OCI-LY7 (cell line): ENCODE measurements at regions of chrX and their contacts with region 1.

Region 1: GRCh38 chrX:107654872-107655761 is 26.8 kb downstream of the PRPS1 start:
- DNase-seq: peak; percentile 67
- H3K4me3 ChIP-seq: no peak overlapping the region
- H3K27ac ChIP-seq: no peak overlapping the region
- H3K4me1 ChIP-seq: peaks cover 7% of the 10 kb centered on the region
- CTCF ChIP-seq: peak; percentile 83

Region 2: DNA sequence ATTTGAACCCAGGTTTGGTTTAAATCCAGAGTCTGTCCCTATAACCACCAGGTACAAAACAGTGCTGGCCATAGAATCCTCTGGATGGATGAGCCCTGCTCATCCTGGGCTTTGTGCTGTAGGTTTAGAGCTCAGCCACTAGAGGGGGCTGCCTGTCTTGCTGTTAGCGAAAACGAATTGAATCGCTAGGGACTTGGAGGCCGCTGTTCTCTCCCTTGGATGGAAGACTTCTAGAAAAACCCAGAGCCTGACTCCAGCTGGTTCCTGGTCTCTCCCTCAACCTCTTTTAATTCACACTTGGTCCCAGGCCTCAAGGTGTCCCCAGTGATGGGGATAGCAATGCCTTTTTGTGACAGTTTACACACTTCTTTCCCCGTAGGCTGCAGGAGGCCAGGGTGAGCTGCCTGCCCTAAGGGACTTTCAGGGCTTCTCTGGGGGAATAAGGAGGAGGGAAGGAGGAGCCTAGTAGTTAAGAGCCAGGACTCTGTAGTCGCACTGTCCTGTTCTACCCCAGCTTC is 760.7 kb before region 1 on chrX:
- CTCF ChIA-PET with region 1: no interaction called
- POLR2A ChIA-PET with region 1: no interaction called
- intact Hi-C with region 1: loop called (anchors 10 kb)
- DNase-seq: peak; percentile 43
- H3K4me3 ChIP-seq: no peak overlapping the region
- H3K27ac ChIP-seq: no peak overlapping the region
- H3K4me1 ChIP-seq: no peaks in the 10 kb centered on the region
- CTCF ChIP-seq: peak; percentile 77

Region 3: GRCh38 chrX:106999002-106999975 is 655.8 kb before region 1 on chrX:
- CTCF ChIA-PET with region 1: no interaction called
- POLR2A ChIA-PET with region 1: no interaction called
- intact Hi-C with region 1: loop called (anchors 10 kb)
- DNase-seq: peak; percentile 67
- H3K4me3 ChIP-seq: peak overlapping the region; percentile 78
- H3K27ac ChIP-seq: peak overlapping the region; percentile 33
- H3K4me1 ChIP-seq: peaks cover 9% of the 10 kb centered on the region
- CTCF ChIP-seq: peak; percentile 75

Region 4: DNA sequence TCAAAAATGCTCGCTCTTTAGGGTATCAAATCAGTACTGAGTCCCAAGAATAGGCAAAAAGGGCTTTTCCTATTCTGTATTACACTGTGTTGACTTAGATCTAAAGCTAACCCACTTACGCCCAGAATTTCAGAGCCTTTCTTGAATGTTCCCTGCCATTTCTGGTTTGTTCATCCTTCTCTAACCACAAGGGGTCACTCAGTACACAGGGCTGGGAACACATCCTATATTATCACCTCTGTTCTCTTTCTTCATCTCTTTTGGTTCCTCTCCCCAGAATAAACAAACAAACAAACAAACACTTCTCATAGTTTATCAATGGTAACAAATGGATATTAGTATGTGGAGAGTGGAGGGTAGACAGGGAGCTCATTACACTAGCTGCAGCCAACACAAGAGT is 629.6 kb before region 1 on chrX:
- CTCF ChIA-PET with region 1: no interaction called
- POLR2A ChIA-PET with region 1: no interaction called
- intact Hi-C with region 1: loop called (anchors 10 kb)
- DNase-seq: peak; percentile 31
- H3K4me3 ChIP-seq: no peak overlapping the region
- H3K27ac ChIP-seq: no peak overlapping the region
- H3K4me1 ChIP-seq: no peaks in the 10 kb centered on the region
- CTCF ChIP-seq: peak; percentile 76

Region 5: GRCh38 chrX:107716816-107717700 is 61.9 kb after region 1 on chrX:
- CTCF ChIA-PET with region 1: no interaction called
- POLR2A ChIA-PET with region 1: interaction called, 4 read pairs
- intact Hi-C with region 1: loop called (anchors 5 kb)
- DNase-seq: peak; percentile 87
- H3K4me3 ChIP-seq: peak overlapping the region; percentile 91
- H3K27ac ChIP-seq: peak overlapping the region; percentile 85
- H3K4me1 ChIP-seq: peaks cover 59% of the 10 kb centered on the region
- CTCF ChIP-seq: no peak

Region 6: DNA sequence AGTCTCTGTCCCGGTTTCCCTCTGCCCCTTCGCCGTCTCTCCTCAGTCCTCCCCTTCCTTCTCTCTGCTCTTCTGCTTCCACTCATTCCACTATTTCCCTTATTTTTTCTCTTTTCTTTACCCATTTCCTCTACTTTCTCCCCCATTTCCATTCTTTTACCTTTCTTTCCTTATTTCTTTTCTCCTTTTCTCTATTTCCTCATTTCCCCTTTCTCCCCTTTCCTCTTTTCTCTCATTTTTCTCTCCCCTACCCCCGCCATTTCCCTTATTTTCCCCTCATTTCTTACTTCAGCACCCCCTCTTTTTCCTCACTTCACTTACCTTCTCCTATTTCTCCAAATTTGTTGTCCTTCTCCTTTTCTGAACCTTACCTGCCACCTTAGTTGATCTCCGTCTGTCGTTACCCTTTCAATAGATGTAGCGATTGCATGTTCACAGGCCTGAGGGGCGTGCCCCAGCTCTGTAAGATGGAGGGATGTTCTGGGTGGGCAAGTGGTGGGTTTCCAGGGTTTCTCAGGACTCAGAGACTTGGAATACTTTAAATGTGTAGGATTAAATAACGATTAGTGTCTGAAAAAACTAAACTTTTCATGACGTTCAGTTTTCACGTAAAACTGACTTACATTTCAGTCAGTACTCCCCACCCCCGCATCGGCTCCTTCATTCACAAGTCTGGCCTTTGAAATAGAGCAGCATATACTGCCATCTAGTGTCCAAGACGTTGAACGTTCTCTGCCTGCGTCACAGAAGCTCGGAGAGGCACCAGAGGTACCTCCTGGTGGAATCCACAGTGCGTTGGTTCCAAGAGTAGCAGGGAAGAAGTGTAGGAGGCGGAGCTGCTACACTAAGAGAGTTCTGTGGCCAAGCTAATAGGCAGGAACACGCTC is 121.8 kb after region 1 on chrX:
- CTCF ChIA-PET with region 1: interaction called, 3 read pairs
- POLR2A ChIA-PET with region 1: interaction called, 3 read pairs
- intact Hi-C with region 1: loop called (anchors 1 kb)
- DNase-seq: peak; percentile 83
- H3K4me3 ChIP-seq: peak overlapping the region; percentile 58
- H3K27ac ChIP-seq: no peak overlapping the region
- H3K4me1 ChIP-seq: peaks cover 11% of the 10 kb centered on the region
- CTCF ChIP-seq: peak; percentile 77

Region 7: GRCh38 chrX:107827030-107827831 is 172.1 kb after region 1 on chrX:
- CTCF ChIA-PET with region 1: no interaction called
- POLR2A ChIA-PET with region 1: no interaction called
- intact Hi-C with region 1: no loop called
- DNase-seq: no peak
- H3K4me3 ChIP-seq: no peak overlapping the region
- H3K27ac ChIP-seq: no peak overlapping the region
- H3K4me1 ChIP-seq: no peaks in the 10 kb centered on the region
- CTCF ChIP-seq: no peak

Region 8: GRCh38 chrX:107894038-107894437 is 238.9 kb after region 1 on chrX:
- CTCF ChIA-PET with region 1: no interaction called
- POLR2A ChIA-PET with region 1: no interaction called
- intact Hi-C with region 1: loop called (anchors 5 kb)
- DNase-seq: peak; percentile 65
- H3K4me3 ChIP-seq: no peak overlapping the region
- H3K27ac ChIP-seq: no peak overlapping the region
- H3K4me1 ChIP-seq: no peaks in the 10 kb centered on the region
- CTCF ChIP-seq: peak; percentile 77